Calu3 (cell line): ENCODE measurements at regions of chr20 and their contacts with region 1.

Region 1: GRCh38 chr20:58087193-58087858 is 141.1 kb downstream of the ANKRD60 start:
- DNase-seq: peak; percentile 86
- H3K4me3 Mint-ChIP-seq: no peak overlapping the region
- H3K27ac Mint-ChIP-seq: peak overlapping the region; percentile 97
- H3K4me1 Mint-ChIP-seq: peaks cover 40% of the 10 kb centered on the region
- H3K27me3 Mint-ChIP-seq: no peaks in the 10 kb centered on the region
- CTCF ChIP-seq: peak; percentile 96

Region 2: DNA sequence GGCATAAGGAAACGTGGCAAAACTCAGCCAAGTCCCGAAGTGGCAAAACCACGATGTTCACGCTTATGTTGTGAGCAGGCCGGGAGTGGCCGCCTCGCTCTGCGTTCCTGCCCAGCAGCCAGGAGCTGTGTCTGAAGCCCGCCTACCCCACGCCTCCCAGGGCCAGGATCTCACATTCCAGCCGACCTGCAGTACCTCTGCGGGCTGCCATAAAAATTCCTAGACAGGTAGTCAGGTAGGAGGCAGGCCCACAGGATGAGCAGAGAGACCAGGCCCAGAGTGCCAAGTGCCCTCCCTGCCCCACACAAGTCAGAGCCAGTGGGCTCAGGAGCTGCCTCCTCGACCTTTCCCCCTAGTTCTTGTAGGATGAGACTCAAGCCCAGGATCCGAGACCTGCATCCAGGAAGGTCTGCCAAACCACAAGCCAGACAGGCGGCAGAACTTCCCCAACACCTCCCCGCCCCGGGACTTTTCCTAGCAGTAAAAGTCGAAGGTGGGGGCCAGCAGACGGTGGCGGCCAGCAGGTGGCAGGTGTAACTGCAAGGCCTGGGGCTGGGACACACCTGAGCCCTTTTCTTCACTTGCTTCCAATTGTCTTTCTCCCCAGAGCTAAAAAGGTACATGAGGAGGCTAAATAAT is 394.2 kb before region 1 on chr20:
- CTCF ChIA-PET with region 1: interaction called, 10 read pairs
- intact Hi-C with region 1: loop called (anchors 2 kb)
- DNase-seq: peak; percentile 94
- H3K4me3 Mint-ChIP-seq: peak overlapping the region; percentile 88
- H3K27ac Mint-ChIP-seq: peak overlapping the region; percentile 97
- H3K4me1 Mint-ChIP-seq: peaks cover 91% of the 10 kb centered on the region
- H3K27me3 Mint-ChIP-seq: no peaks in the 10 kb centered on the region
- CTCF ChIP-seq: peak; percentile 68

Region 3: DNA sequence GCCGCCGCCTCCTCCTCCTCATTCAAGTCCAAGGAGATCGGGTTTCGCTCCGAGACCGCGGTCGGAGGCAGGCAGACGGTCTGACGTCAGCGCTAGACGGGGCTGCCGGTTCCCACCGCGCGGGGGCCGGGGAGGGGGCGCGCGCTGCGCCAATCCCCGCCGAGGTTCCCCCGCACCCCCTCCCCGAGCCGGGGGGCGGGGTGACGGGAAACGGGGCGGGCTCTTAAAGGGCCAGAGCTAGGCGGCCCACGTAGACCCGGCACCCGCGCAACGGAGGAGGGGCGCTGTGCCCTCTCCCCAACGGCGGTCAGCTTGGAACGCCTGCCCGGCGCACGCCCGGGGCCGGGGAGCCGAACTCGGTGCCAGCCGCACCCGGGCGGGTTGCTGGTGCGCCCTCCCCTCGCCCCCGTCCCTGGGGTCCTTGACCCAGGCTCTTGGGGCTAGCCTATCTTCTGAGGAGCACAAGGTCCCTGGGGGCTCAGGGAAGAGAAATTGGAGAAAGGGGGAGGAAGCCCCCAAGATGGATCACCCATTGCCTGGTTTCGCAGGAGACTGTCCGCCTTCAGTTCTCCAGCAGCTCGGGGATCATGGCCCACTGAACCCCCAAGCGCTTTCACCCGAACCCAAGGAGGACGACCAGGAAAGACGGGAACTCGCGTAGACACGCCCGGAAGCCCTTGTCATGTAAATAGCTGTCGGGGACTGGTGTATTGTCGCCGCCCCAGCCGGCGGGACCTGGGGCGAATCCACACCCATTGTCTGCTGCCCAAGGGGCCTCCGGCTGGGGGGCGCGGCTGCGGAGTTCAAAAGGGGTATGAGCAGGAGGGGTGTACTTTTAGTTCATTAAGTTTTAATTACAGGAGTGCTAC is 377.2 kb before region 1 on chr20 and contains the start of gene PMEPA1:
- CTCF ChIA-PET with region 1: interaction called, 34 read pairs
- intact Hi-C with region 1: loop called (anchors 2 kb)
- DNase-seq: peak; percentile 100
- H3K4me3 Mint-ChIP-seq: peak within 1 kb of the TSS; percentile 88
- H3K27ac Mint-ChIP-seq: peak within 1 kb of the TSS; percentile 97
- H3K4me1 Mint-ChIP-seq: peaks cover 46% of the 10 kb centered on the region
- H3K27me3 Mint-ChIP-seq: no peaks in the 10 kb centered on the region
- CTCF ChIP-seq: no peak
- total RNA-seq, gene PMEPA1: 732 and 1,302 TPM in 2 replicates

Region 4: GRCh38 chr20:57902290-57902872 is 184.9 kb before region 1 on chr20:
- CTCF ChIA-PET with region 1: interaction called, 7 read pairs
- intact Hi-C with region 1: loop called (anchors 2 kb)
- DNase-seq: peak; percentile 63
- H3K4me3 Mint-ChIP-seq: peak overlapping the region; percentile 11
- H3K27ac Mint-ChIP-seq: peak overlapping the region; percentile 76
- H3K4me1 Mint-ChIP-seq: peaks cover 77% of the 10 kb centered on the region
- H3K27me3 Mint-ChIP-seq: no peaks in the 10 kb centered on the region
- CTCF ChIP-seq: peak; percentile 40

Region 5: DNA sequence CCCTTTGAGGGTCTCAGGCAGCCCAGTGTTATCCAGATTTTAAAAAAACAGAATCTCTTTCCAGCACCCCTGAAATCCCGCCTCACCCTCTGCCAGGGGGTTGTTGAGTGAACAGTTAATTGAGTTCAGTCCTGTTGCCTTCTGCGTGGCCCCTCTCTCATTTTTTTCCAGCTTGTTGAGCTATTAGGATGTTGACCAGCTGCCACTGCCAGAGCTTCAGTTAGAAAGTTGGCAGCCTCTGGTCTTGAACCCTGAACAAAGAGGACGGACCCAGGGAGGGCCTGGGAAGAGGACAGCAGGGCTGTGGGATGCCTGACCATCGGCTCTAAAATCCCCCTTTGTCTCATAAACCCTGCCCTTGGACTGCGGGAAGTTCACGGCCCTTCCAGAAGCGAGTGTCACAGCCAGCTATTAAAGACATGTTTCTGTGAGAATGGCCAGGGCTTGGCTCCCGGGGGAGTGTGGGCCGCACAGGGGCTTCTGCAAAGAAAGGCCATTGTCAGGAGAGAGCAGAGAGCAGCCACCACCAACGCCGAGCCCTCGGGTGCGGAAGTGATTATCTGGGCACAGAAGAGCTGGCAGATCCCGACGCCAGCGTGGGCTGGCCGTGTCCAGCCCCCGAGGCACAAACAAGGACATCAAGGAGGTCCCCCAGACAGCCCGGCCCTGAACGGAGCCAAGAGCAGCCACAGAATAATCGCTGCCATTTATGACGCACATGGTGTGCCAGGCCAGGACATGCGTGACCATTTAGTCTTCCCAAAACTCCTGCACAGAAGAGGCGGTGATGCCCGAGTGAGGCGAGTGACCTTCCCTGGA is 47.8 kb before region 1 on chr20:
- CTCF ChIA-PET with region 1: no interaction called
- intact Hi-C with region 1: no loop called
- DNase-seq: no peak
- H3K4me3 Mint-ChIP-seq: no peak overlapping the region
- H3K27ac Mint-ChIP-seq: no peak overlapping the region
- H3K4me1 Mint-ChIP-seq: no peaks in the 10 kb centered on the region
- H3K27me3 Mint-ChIP-seq: no peaks in the 10 kb centered on the region
- CTCF ChIP-seq: no peak

Region 6: GRCh38 chr20:58131551-58132142 is 44.3 kb after region 1 on chr20:
- CTCF ChIA-PET with region 1: interaction called, 10 read pairs
- intact Hi-C with region 1: loop called (anchors 1 kb)
- DNase-seq: peak; percentile 86
- H3K4me3 Mint-ChIP-seq: peak overlapping the region; percentile 63
- H3K27ac Mint-ChIP-seq: peak overlapping the region; percentile 99
- H3K4me1 Mint-ChIP-seq: peaks cover 89% of the 10 kb centered on the region
- H3K27me3 Mint-ChIP-seq: no peaks in the 10 kb centered on the region
- CTCF ChIP-seq: no peak

Region 7: GRCh38 chr20:58907399-58908137 is 820.2 kb after region 1 on chr20:
- CTCF ChIA-PET with region 1: no interaction called
- intact Hi-C with region 1: no loop called
- DNase-seq: peak; percentile 58
- H3K4me3 Mint-ChIP-seq: peak overlapping the region; percentile 5
- H3K27ac Mint-ChIP-seq: peak overlapping the region; percentile 58
- H3K4me1 Mint-ChIP-seq: peaks cover 17% of the 10 kb centered on the region
- H3K27me3 Mint-ChIP-seq: no peaks in the 10 kb centered on the region
- CTCF ChIP-seq: no peak